ENCODE measurements at regions of chr1 and their contacts with region 1.

Region 1: GRCh38 chr1:46036894-46037839 is 95.3 kb downstream of the PIK3R3 start:
- DNase-seq: peak; percentile 14
- H3K4me3 ChIP-seq: no peak overlapping the region
- CTCF ChIP-seq: peak; percentile 96

Region 2: GRCh38 chr1:46021046-46021996 is 15.8 kb before region 1 on chr1:
- CTCF ChIA-PET with region 1: interaction called, 29 read pairs
- POLR2A ChIA-PET with region 1: no interaction called
- DNase-seq: no peak
- H3K4me3 ChIP-seq: no peak overlapping the region
- CTCF ChIP-seq: no peak

Region 3: GRCh38 chr1:46026531-46026930 is 10.6 kb before region 1 on chr1:
- CTCF ChIA-PET with region 1: interaction called, 29 read pairs
- POLR2A ChIA-PET with region 1: no interaction called
- DNase-seq: no peak
- H3K4me3 ChIP-seq: no peak overlapping the region
- CTCF ChIP-seq: no peak

Region 4: GRCh38 chr1:46179138-46180081 is 142.2 kb after region 1 on chr1:
- CTCF ChIA-PET with region 1: interaction called, 631 read pairs
- POLR2A ChIA-PET with region 1: interaction called, 4 read pairs
- DNase-seq: peak; percentile 41
- H3K4me3 ChIP-seq: no peak overlapping the region
- CTCF ChIP-seq: peak; percentile 87

Region 5: DNA sequence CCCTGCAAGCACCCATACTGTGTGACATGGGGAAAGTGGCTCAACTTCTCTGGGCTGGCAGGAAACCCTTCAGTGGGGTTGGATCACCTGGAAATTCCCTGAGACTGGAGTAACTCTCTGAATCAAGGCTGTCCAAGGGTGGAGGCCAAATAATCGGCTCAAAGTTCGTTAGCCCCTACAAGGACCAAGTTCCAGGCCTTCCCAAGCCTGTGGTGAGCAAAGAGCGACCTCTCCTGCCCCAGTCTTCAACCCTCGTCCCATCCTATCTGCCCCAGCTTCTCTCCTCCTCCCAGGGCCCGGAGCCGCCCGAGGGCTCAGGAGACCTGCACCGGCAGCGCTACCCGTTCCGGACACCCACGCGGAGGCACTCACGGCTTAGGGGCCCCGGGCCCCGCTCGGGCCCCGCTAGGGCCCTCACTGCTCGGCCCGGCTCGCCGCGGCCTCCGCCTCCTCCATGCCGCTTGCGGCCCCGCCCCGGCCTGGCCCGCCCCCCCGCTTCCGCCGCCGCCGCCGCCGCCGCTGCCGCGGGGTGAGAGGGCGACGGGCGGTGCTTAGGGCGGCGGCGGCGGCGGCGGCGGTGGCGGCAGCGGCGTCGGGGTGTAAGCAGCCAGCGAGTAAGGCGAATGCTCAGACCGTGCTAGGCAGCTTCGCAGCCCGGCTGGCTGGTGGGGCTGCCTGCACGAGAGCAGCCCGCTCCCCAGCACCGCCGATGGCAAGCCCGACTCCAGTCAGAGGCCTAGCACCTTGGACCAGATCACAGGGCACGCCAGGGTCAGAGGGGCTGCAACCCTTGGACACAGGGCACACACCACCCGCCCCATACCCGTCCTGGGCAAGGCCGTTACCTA is 161.0 kb after region 1 on chr1 and contains the start of gene POMGNT1:
- CTCF ChIA-PET with region 1: interaction called, 22 read pairs
- POLR2A ChIA-PET with region 1: no interaction called
- DNase-seq: no peak
- H3K4me3 ChIP-seq: peak within 1 kb of the TSS; percentile 86
- CTCF ChIP-seq: peak; percentile 16

Measured in AG04449 (cell line).